ENCODE measurements at regions of chr1 and their contacts with region 1.

Region 1: GRCh38 chr1:44672254-44672955 is 1.9 kb downstream of the TMEM53 start:
- DNase-seq: peak in 1 of 2 donors; percentile 63
- H3K4me3 ChIP-seq: no peak overlapping the region
- H3K27ac ChIP-seq: peak overlapping the region in 1 of 2 donors; percentile 93
- H3K4me1 ChIP-seq: peaks cover 0 to 25% (median 19%) of the 10 kb centered on the region in 4 donors
- H3K27me3 ChIP-seq: peaks cover 0 to 2% of the 10 kb centered on the region in 2 donors
- CTCF ChIP-seq: no peak

Region 2: DNA sequence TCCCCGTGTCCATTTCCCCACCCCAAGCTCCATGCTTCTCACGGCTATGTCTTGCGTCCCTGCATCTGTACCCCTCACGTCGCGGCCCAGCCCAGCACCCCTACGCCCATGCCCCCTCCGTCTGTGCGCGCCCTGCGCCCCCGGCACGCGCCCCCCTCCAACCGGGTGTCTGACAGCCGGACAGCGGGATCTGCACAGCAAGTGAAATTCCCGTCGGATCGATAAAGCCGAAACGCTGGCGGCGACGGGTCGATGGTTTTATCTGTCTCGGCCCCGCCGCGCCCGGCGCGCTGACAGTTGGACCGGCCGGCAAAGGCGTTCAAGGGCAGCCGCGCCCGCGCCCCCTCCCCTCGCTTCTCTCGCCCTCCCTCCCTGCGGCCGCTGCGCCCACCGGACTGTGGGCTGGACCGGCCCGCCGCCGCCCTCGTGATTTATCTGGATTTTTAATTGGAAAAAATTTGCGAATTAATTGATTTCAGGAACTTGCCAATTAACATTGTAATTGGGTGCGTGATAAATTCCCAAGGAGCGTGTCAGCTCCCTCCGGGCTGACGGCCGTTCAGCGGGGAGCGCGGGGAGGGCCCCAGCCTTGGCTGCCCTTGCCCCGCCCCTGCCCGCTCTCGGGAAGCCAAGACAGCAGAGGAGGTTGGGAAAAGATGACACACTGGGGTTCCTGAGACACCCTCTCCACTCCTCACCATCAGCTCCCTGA is 55.3 kb before region 1 on chr1:
- intact Hi-C with region 1: no loop called
- DNase-seq: no peak
- H3K4me3 ChIP-seq: peak overlapping the region in 1 of 2 donors; percentile 43
- H3K27ac ChIP-seq: no peak overlapping the region
- H3K4me1 ChIP-seq: peaks cover 0 to 12% (median 9%) of the 10 kb centered on the region in 4 donors
- H3K27me3 ChIP-seq: peaks cover 0 to 51% of the 10 kb centered on the region in 2 donors
- CTCF ChIP-seq: no peak

Region 3: GRCh38 chr1:44631647-44632539 is 40.5 kb before region 1 on chr1:
- intact Hi-C with region 1: loop called (anchors 2 kb)
- DNase-seq: peak; percentile 91 to 93
- H3K4me3 ChIP-seq: peak overlapping the region; percentile 64 to 90
- H3K27ac ChIP-seq: peak overlapping the region; percentile 92 to 94
- H3K4me1 ChIP-seq: peaks cover 0 to 28% (median 22%) of the 10 kb centered on the region in 4 donors
- H3K27me3 ChIP-seq: no peaks in the 10 kb centered on the region
- CTCF ChIP-seq: peak in 1 of 2 experiments; percentile 18

Measured in tibial artery (tissue), 4 donors.